Calu3 (cell line): ENCODE measurements at regions of chr19 and their contacts with region 1.

Region 1: GRCh38 chr19:46776927-46777911 is 11.2 kb downstream of the SLC1A5 start:
- DNase-seq: peak; percentile 38
- H3K4me3 Mint-ChIP-seq: no peak overlapping the region
- H3K27ac Mint-ChIP-seq: peak overlapping the region; percentile 13
- H3K4me1 Mint-ChIP-seq: peaks cover 22% of the 10 kb centered on the region
- H3K27me3 Mint-ChIP-seq: no peaks in the 10 kb centered on the region
- CTCF ChIP-seq: no peak

Region 2: DNA sequence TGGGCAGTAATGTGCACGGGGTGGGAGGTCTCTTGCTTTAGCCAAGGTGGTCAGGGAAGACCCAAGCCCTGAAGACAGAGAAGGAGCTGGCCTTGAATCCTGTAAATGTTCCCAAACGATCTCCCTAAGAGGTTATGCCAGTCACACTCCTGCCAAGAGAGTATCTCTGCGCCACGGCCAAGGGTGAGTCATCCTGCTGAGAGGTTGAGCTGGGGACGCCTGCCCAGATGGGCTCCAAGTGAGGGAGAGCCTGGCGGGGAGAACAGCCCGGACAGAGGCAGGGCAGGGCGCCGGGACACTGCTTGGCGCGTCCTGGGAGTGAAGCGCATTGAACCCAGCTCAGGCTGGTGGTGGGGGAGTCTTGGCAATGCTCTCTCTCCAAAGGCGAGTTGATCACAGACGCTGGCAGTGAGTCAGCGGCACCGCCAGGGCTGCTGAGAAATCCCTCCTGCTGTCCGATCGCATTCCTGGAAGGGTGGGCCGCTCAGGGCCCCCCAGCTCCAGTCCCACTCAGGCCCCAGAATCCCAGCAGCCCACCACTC is 1791.2 kb after region 1 on chr19:
- CTCF ChIA-PET with region 1: interaction called, 10 read pairs
- intact Hi-C with region 1: no loop called
- DNase-seq: peak; percentile 83
- H3K4me3 Mint-ChIP-seq: peak overlapping the region; percentile 19
- H3K27ac Mint-ChIP-seq: no peak overlapping the region
- H3K4me1 Mint-ChIP-seq: peaks cover 31% of the 10 kb centered on the region
- H3K27me3 Mint-ChIP-seq: no peaks in the 10 kb centered on the region
- CTCF ChIP-seq: no peak